ENCODE measurements at regions of chr14 and their contacts with region 1.

Region 1: DNA sequence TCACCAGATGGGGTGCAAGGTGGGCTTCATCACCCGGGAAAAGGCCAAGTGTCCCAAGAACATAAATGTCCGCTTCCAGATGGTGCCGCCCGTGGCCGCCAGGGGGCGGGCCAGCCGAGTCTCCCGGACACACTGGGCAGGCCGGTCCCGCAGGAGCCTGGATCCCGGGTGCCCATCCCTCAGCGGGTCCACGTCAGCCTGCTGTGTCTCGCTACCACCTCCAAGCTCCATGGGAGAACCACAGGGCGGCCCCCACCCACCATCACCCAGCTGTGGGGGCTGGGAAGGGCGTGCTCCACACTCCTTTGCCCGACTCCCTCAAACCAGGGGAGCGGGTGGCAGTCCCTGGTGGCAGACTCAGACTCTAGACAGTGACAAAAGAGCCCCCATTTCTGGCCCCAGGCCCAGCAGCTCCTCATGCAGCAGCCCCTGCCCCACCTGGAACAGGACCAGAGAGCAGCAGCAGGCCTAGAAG is 22.0 kb upstream of the NUDT14 start:
- DNase-seq: peak; percentile 88
- ATAC-seq: peak; percentile 67

Region 2: DNA sequence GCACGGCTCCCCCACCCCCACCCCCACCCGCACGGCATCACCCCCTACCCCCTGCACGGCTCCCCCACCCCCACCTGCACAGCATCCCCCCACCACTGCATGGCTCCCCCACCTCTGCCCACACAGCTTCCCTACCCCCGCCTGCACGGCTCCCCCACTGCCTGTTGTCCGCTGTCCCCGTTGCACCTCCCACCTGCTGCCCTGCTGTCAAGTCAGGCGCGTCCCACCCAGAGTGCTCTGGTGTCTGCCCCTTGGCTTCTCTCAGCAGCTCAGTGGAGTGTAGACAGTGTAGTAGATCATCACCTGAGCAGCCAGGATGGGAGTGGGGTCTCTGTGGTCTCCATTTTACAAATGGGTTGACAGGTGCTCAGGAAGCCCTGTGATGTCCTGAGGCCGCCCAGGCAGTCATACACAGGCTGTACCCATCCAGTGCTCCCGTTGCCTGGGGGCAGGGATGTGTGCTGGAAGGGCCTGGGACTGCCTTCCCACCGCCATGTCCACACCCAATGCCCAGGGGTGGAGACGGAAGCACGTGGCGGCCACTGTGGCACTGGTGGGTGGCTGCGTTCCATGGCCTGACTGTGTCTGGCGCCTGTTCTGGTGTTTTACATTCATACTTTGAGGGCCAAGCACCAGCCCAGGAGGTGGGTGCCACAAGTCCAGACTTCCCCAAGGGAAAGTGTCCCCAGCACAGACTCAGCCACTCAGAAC is 143.9 kb after region 1 on chr14:
- intact Hi-C with region 1: loop called (anchors 5 kb)
- DNase-seq: no peak
- ATAC-seq: peak; percentile 39

Region 3: GRCh38 chr14:105430535-105430934 is 227.4 kb after region 1 on chr14:
- intact Hi-C with region 1: no loop called
- DNase-seq: no peak
- ATAC-seq: no peak